GM12878 (cell line): ENCODE measurements at regions of chr14 and their contacts with region 1.

Region 1: GRCh38 chr14:52473557-52473956 is 78.7 kb downstream of the TXNDC16 start:
- DNase-seq: no peak
- ATAC-seq: peak; percentile 30; the same call in 1 of the 3 replicates
- H3K4me3 ChIP-seq: no peak overlapping the region
- H3K27ac ChIP-seq: no peak overlapping the region
- H3K4me1 ChIP-seq: no peaks in the 10 kb centered on the region
- H3K27me3 ChIP-seq: no peaks in the 10 kb centered on the region
- CTCF ChIP-seq: peak; percentile 18 to 43 (median 22); a peak in 2 of 6 replicates
- EP300 ChIP-seq: no peak
- POLR2A ChIP-seq: no peak
- RAD21 ChIP-seq: peak; percentile 42

Region 2: GRCh38 chr14:51989293-51990234 is 484.0 kb before region 1 on chr14 and contains the start of gene RTRAF:
- CTCF ChIA-PET with region 1: no interaction called
- POLR2A ChIA-PET with region 1: no interaction called
- RAD21 ChIA-PET with region 1: no interaction called
- SMC1A ChIA-PET with region 1: no interaction called
- in situ Hi-C with region 1: no loop called
- intact Hi-C with region 1: loop called (anchors 10 kb)
- DNase-seq: peak; percentile 69
- ATAC-seq: peak; percentile 95
- H3K4me3 ChIP-seq: peak within 1 kb of the TSS; percentile 89
- H3K27ac ChIP-seq: peak within 1 kb of the TSS; percentile 88
- H3K4me1 ChIP-seq: peaks cover 6% of the 10 kb centered on the region
- H3K27me3 ChIP-seq: no peaks in the 10 kb centered on the region
- CTCF ChIP-seq: no peak
- EP300 ChIP-seq: no peak
- POLR2A ChIP-seq: peak; percentile 97
- RAD21 ChIP-seq: no peak
- polyA plus RNA-seq, gene RTRAF: 358 to 395 TPM

Region 3: GRCh38 chr14:52179141-52179790 is 294.3 kb before region 1 on chr14:
- CTCF ChIA-PET with region 1: no interaction called
- POLR2A ChIA-PET with region 1: no interaction called
- RAD21 ChIA-PET with region 1: no interaction called
- SMC1A ChIA-PET with region 1: no interaction called
- in situ Hi-C with region 1: no loop called
- intact Hi-C with region 1: no loop called
- DNase-seq: no peak
- ATAC-seq: no peak
- H3K4me3 ChIP-seq: no peak overlapping the region
- H3K27ac ChIP-seq: no peak overlapping the region
- H3K4me1 ChIP-seq: no peaks in the 10 kb centered on the region
- H3K27me3 ChIP-seq: no peaks in the 10 kb centered on the region
- CTCF ChIP-seq: no peak
- EP300 ChIP-seq: no peak
- POLR2A ChIP-seq: no peak
- RAD21 ChIP-seq: no peak